ENCODE measurements at regions of chr5 and their contacts with region 1.

Region 1: DNA sequence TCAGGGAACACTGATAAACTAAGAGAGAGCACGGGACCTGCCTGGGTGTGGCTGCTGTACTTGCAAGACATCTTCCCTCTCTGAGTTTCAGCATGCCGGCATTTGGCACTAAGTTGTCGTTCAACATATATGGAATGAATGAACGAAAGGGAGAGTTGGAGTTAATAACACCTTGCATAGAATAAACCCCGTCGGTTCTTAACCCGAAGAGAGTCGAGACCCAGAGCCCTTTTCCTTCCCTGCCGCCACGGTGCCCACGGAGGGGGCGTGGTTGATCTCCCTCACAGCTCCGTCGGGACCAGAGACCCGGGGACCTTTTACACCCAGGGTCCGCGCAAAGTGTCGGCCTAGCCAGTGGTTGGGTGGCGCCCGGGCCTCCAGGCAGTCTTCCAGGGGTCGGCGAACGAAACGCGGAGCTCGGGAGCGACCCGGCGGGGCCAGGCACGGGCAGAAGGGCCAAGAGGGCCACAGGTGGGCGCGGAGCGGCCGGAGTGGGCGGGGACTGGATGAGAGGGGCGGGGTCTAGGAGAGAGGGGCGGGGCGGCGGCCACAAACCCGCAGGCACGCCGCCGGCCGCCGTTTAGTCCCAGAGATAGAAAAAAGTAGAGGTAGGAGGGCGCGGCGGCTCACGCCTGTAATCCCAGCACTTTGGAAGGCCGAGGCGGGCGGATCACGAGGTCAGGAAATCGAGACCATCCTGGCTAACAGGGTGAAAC is 735 bp upstream of the RPL26L1 start:
- DNase-seq: peak; percentile 23 to 79 (median 63)
- ATAC-seq: peak; percentile 65
- H3K4me3 ChIP-seq: peak overlapping the region; percentile 76 to 77
- H3K4me3 Mint-ChIP-seq: peak overlapping the region; percentile 97
- H3K27ac ChIP-seq: peak overlapping the region; percentile 65 to 87
- H3K27ac Mint-ChIP-seq: peak overlapping the region; percentile 98
- H3K4me1 ChIP-seq: peaks cover 13% of the 10 kb centered on the region
- H3K4me1 Mint-ChIP-seq: peaks cover 38% of the 10 kb centered on the region
- H3K27me3 ChIP-seq: no peaks in the 10 kb centered on the region
- H3K27me3 Mint-ChIP-seq: no peaks in the 10 kb centered on the region
- CTCF ChIP-seq: no peak

Region 2: GRCh38 chr5:172454358-172455086 is 504.0 kb before region 1 on chr5 and contains the start of gene SH3PXD2B:
- CTCF ChIA-PET with region 1: no interaction called
- POLR2A ChIA-PET with region 1: no interaction called
- intact Hi-C with region 1: loop called in 1 of 2 experiments (anchors 10 kb)
- DNase-seq: peak in 8 of 9 experiments; percentile 15 to 72 (median 38)
- ATAC-seq: peak; percentile 82
- H3K4me3 ChIP-seq: peak within 1 kb of the TSS; percentile 39 to 57
- H3K4me3 Mint-ChIP-seq: peak within 1 kb of the TSS; percentile 84
- H3K27ac ChIP-seq: no peak within 1 kb of the TSS
- H3K27ac Mint-ChIP-seq: no peak within 1 kb of the TSS
- H3K4me1 ChIP-seq: peaks cover 4% of the 10 kb centered on the region
- H3K4me1 Mint-ChIP-seq: peaks cover 12% of the 10 kb centered on the region
- H3K27me3 ChIP-seq: peaks cover 0 to 7% of the 10 kb centered on the region in 2 experiments
- H3K27me3 Mint-ChIP-seq: peaks cover 25% of the 10 kb centered on the region
- CTCF ChIP-seq: no peak
- total RNA-seq, gene SH3PXD2B: 0.03 to 0.08 TPM

Region 3: DNA sequence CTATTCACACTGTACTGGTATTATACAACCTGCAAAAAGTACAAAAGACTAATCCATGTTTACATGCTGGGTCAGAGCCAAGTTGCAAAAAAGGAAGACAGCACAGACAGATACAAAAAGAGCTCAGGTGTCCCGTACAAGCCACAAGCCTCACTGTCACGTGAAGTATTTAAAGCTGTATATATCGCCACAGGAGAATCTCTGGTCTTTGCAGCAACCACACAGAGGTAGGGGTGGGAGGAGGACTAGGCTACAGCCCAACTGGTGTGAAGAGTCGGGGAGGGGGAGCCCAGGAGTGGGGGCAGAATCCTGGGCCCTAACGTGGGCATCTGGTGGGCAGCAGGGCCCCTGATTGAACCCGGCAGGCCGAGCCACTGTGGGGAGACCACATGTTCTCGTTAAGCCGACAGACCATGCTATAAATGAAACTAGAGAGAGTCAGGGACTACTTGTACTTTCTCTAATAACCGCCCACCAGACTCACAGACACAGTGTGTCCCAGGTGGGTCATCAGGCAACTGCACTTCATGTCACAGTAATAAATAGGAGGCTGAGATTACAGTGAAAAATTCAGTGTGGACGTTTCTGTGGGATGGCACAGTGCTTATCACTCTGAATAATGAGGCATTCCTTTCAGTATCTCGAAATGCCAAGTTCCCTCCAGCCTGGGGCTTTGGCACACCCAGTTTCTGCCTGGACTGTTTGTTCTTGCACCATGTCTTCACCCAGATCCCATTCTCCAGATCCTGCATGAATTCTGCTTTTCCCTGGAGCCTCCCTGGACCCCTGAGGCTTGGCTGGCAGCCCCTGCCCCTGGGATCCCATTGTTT is 424.9 kb before region 1 on chr5:
- CTCF ChIA-PET with region 1: no interaction called
- POLR2A ChIA-PET with region 1: no interaction called
- intact Hi-C with region 1: no loop called
- DNase-seq: peak in 1 of 9 experiments; percentile 27
- ATAC-seq: no peak
- H3K4me3 ChIP-seq: no peak overlapping the region
- H3K4me3 Mint-ChIP-seq: no peak overlapping the region
- H3K27ac ChIP-seq: no peak overlapping the region
- H3K27ac Mint-ChIP-seq: no peak overlapping the region
- H3K4me1 ChIP-seq: no peaks in the 10 kb centered on the region
- H3K4me1 Mint-ChIP-seq: peaks cover 2% of the 10 kb centered on the region
- H3K27me3 ChIP-seq: no peaks in the 10 kb centered on the region
- H3K27me3 Mint-ChIP-seq: peaks cover 3% of the 10 kb centered on the region
- CTCF ChIP-seq: no peak

Region 4: GRCh38 chr5:172770675-172771438 is 187.6 kb before region 1 on chr5 and contains the start of gene DUSP1:
- CTCF ChIA-PET with region 1: interaction called, 3 read pairs
- POLR2A ChIA-PET with region 1: interaction called, 12 read pairs
- intact Hi-C with region 1: loop called in 1 of 2 experiments (anchors 1 kb)
- DNase-seq: peak; percentile 97 to 99 (median 98)
- ATAC-seq: peak; percentile 54
- H3K4me3 ChIP-seq: peak within 1 kb of the TSS; percentile 85 to 89
- H3K4me3 Mint-ChIP-seq: peak within 1 kb of the TSS; percentile 95
- H3K27ac ChIP-seq: peak within 1 kb of the TSS; percentile 99 to 100
- H3K27ac Mint-ChIP-seq: peak within 1 kb of the TSS; percentile 98
- H3K4me1 ChIP-seq: peaks cover 36% of the 10 kb centered on the region
- H3K4me1 Mint-ChIP-seq: peaks cover 58% of the 10 kb centered on the region
- H3K27me3 ChIP-seq: no peaks in the 10 kb centered on the region
- H3K27me3 Mint-ChIP-seq: no peaks in the 10 kb centered on the region
- CTCF ChIP-seq: no peak
- total RNA-seq, gene DUSP1: 745 to 767 TPM

Region 5: DNA sequence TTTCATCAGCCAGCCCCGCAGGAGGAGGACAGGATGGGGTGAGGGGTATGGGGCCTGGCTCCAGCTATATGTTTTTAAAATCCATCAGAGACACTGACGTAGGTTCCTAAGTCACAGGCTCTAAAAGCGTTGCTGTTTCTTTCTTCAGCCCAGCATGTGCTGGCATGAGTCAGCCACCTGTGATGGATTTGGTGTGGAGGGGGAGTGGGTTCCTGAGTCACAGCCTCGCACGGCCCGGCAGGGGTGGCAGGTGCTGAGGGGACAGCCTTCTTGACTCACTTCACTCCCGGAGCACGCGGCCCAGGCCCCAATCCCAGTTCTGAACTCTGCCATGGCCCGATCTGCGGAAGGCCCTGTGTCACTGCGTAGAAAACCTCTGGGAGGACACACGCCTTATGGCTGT is 38.0 kb before region 1 on chr5:
- CTCF ChIA-PET with region 1: no interaction called
- POLR2A ChIA-PET with region 1: no interaction called
- intact Hi-C with region 1: loop called in 1 of 2 experiments (anchors 2 kb)
- DNase-seq: no peak
- ATAC-seq: no peak
- H3K4me3 ChIP-seq: no peak overlapping the region
- H3K4me3 Mint-ChIP-seq: no peak overlapping the region
- H3K27ac ChIP-seq: no peak overlapping the region
- H3K27ac Mint-ChIP-seq: peak overlapping the region; percentile 100
- H3K4me1 ChIP-seq: peaks cover 26% of the 10 kb centered on the region
- H3K4me1 Mint-ChIP-seq: peaks cover 27% of the 10 kb centered on the region
- H3K27me3 ChIP-seq: no peaks in the 10 kb centered on the region
- H3K27me3 Mint-ChIP-seq: no peaks in the 10 kb centered on the region
- CTCF ChIP-seq: no peak

Region 6: DNA sequence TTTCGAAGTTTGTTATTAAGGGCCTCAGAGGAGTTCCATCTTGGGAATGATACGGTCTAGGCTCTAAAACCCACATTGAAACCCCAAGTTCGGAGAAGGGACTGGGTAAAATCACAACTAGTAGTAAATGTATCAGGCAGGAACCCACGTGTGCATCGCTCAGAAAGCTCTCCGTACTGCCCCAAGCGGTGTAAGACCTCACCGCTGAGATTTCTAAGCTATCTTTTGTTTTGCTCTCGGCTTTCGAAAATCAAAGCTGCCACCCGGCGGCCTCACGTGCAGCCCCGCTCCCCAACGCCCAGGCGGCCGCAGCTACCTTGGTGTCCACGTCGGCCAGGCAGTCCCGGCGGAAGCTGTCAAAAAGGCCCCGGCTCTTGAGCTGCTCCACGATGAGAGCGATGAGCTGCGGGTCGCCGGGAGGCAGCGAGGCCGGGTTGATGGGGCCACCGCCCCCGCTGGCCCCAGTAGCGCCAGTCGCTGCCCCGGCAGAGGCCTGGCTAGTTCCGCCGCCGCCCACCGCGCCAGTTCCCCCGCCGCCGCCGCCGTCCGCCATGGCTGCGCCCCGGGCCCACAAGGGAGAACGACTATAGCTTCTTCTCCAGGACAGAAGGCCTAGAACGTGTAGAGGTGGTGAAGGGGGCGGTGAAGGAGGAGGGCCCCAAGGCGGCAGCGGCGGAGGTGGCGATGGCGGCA is 657.5 kb after region 1 on chr5:
- CTCF ChIA-PET with region 1: no interaction called
- POLR2A ChIA-PET with region 1: no interaction called
- intact Hi-C with region 1: loop called in 1 of 2 experiments (anchors 2 kb)
- DNase-seq: peak; percentile 41 to 88 (median 70)
- ATAC-seq: peak; percentile 60
- H3K4me3 ChIP-seq: peak overlapping the region; percentile 81 to 89
- H3K4me3 Mint-ChIP-seq: peak overlapping the region; percentile 95
- H3K27ac ChIP-seq: peak overlapping the region; percentile 85 to 91
- H3K27ac Mint-ChIP-seq: peak overlapping the region; percentile 97
- H3K4me1 ChIP-seq: peaks cover 34% of the 10 kb centered on the region
- H3K4me1 Mint-ChIP-seq: peaks cover 52% of the 10 kb centered on the region
- H3K27me3 ChIP-seq: no peaks in the 10 kb centered on the region
- H3K27me3 Mint-ChIP-seq: no peaks in the 10 kb centered on the region
- CTCF ChIP-seq: peak; percentile 73

Measured in CD8-positive, alpha-beta T cell (primary cell).